Vagina (tissue), 2 donors: ENCODE measurements at regions of chr9 and their contacts with region 1.

Region 1: DNA sequence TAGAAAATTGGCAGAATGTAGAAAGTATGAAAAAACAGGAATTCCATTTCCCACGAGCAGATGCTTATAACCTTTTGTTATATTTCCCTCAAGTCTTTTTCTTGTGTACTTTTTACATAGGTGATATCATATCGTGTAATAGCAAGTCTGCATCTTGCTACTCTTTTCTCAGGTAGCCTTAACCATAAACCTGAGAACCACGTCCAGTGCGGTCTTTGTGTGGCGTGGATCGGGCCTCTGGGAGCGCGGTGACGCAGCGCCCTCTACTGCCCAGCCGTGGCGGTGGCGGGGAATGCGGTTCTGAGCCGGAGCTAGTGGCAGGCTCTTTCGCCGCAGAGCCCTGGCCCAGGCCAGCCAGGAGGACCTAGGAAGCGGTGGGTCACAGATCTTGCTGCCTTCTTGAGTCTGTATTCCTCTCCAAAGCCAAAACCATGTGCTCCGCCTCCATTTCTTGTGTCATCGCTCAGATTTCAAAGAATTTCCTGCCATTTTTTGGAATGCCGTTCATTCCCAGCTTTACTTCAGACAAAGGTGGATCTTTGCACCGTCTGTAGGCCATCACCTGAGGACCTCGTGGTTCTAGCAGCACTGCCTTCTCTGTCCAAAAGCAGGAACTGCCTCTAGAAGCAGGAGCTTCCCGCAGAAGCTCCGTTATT is 71.9 kb downstream of the MVB12B start:
- DNase-seq: no peak
- H3K4me3 ChIP-seq: no peak overlapping the region
- H3K27ac ChIP-seq: peak overlapping the region; percentile 24
- H3K4me1 ChIP-seq: peaks cover 37% of the 10 kb centered on the region
- H3K27me3 ChIP-seq: no peaks in the 10 kb centered on the region
- CTCF ChIP-seq: peak; percentile 66 to 93 (median 92)
- POLR2A ChIP-seq: no peak

Region 2: DNA sequence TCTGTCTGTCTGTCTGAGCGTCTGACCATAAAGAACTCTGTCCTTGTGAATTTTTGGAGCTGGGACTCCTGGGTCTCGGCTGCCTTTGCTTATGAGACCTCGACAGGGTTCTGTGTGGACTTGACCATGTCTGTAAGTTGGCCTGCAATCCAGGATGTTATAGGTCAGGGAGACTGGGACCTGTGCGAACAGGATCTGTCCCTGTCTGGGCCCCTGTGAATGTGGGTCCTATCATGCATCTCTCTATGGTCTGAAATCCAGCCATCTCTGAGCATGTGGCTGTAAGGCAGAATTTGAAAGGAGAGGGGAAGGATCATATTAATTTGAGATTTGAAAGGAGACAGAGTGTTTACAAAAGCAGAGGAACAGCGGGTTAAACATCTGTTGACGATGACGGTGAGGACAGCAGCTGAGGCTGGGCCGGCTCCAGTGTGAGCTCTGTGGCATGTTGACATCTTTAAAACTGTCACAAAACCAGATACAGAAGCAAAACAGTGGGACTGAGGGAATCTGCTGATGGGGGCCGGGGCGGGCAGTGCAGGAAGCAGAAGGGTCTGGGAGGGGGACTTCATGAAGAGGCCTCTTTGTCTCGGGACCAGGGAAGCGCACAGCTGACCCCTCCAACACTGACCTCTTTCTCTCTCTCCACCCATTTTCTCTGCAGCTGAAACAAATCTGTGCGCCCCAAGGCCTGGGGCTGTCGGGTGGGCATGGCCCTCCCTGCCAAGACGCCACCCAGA is 91.0 kb before region 1 on chr9:
- intact Hi-C with region 1: loop called (anchors 5 kb)
- DNase-seq: peak in 1 of 2 donors; percentile 37
- H3K4me3 ChIP-seq: no peak overlapping the region
- H3K27ac ChIP-seq: no peak overlapping the region
- H3K4me1 ChIP-seq: no peaks in the 10 kb centered on the region
- H3K27me3 ChIP-seq: no peaks in the 10 kb centered on the region
- CTCF ChIP-seq: no peak
- POLR2A ChIP-seq: no peak

Region 3: GRCh38 chr9:126326228-126327005 is 72.1 kb before region 1 on chr9 and contains the start of gene MVB12B:
- intact Hi-C with region 1: no loop called
- DNase-seq: no peak
- H3K4me3 ChIP-seq: peak within 1 kb of the TSS; percentile 63 to 81
- H3K27ac ChIP-seq: peak within 1 kb of the TSS; percentile 93
- H3K4me1 ChIP-seq: peaks cover 44% of the 10 kb centered on the region
- H3K27me3 ChIP-seq: no peaks in the 10 kb centered on the region
- CTCF ChIP-seq: no peak
- POLR2A ChIP-seq: no peak
- total RNA-seq, gene MVB12B: 16.5 TPM